CD4-positive, alpha-beta memory T cell (primary cell): ENCODE measurements at regions of chr2 and their contacts with region 1.

Region 1: GRCh38 chr2:86035883-86036668 is 69.6 kb downstream of the POLR1A start:
- DNase-seq: peak; percentile 79 to 88 (median 84)
- H3K4me3 ChIP-seq: peak overlapping the region; percentile 28 to 37
- H3K4me3 Mint-ChIP-seq: peak overlapping the region; percentile 74 to 87 (median 84)
- H3K27ac ChIP-seq: peak overlapping the region; percentile 82
- H3K27ac Mint-ChIP-seq: peak overlapping the region; percentile 96 to 100 (median 100)
- H3K4me1 ChIP-seq: peaks cover 81% of the 10 kb centered on the region
- H3K4me1 Mint-ChIP-seq: peaks cover 56 to 82% (median 68%) of the 10 kb centered on the region in 4 donors
- H3K27me3 ChIP-seq: no peaks in the 10 kb centered on the region
- H3K27me3 Mint-ChIP-seq: peaks cover 0 to 2% of the 10 kb centered on the region in 2 donors

Region 2: DNA sequence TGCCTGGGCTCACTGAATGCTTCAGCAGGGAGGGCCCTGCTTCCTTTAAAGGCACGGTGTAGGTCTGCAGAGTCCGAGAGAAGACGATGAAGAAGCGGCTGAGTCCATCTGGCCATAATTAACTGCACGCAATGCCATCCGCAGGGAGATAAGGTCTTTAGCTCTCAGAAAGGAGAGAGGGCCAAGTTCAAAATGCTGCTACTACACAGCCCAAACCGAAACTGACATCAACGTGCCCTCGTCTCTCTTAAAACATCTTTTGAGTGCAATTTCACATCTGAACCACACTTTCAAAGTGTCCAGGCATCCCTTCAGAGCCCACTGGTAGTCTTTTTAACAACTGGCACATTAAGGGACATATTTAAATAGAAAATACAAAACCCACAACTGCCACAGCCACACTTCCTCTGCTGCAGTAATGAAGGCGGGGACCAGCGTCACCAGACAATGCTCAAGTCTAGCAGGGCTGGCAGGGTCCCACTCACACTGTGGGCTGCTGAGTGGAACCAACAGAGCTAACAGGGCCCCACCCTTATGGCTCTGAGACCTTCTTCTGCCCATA is 183.1 kb before region 1 on chr2:
- CTCF ChIA-PET with region 1: interaction called, 9 read pairs
- POLR2A ChIA-PET with region 1: interaction called, 47 read pairs
- intact Hi-C with region 1: loop called (anchors 1 kb)
- DNase-seq: peak; percentile 73 to 88 (median 74)
- H3K4me3 ChIP-seq: peak overlapping the region; percentile 34 to 48
- H3K4me3 Mint-ChIP-seq: peak overlapping the region; percentile 82 to 92 (median 86)
- H3K27ac ChIP-seq: peak overlapping the region; percentile 84
- H3K27ac Mint-ChIP-seq: peak overlapping the region; percentile 98 to 100 (median 100)
- H3K4me1 ChIP-seq: peaks cover 81% of the 10 kb centered on the region
- H3K4me1 Mint-ChIP-seq: peaks cover 67 to 87% (median 76%) of the 10 kb centered on the region in 4 donors
- H3K27me3 ChIP-seq: no peaks in the 10 kb centered on the region
- H3K27me3 Mint-ChIP-seq: no peaks in the 10 kb centered on the region

Region 3: DNA sequence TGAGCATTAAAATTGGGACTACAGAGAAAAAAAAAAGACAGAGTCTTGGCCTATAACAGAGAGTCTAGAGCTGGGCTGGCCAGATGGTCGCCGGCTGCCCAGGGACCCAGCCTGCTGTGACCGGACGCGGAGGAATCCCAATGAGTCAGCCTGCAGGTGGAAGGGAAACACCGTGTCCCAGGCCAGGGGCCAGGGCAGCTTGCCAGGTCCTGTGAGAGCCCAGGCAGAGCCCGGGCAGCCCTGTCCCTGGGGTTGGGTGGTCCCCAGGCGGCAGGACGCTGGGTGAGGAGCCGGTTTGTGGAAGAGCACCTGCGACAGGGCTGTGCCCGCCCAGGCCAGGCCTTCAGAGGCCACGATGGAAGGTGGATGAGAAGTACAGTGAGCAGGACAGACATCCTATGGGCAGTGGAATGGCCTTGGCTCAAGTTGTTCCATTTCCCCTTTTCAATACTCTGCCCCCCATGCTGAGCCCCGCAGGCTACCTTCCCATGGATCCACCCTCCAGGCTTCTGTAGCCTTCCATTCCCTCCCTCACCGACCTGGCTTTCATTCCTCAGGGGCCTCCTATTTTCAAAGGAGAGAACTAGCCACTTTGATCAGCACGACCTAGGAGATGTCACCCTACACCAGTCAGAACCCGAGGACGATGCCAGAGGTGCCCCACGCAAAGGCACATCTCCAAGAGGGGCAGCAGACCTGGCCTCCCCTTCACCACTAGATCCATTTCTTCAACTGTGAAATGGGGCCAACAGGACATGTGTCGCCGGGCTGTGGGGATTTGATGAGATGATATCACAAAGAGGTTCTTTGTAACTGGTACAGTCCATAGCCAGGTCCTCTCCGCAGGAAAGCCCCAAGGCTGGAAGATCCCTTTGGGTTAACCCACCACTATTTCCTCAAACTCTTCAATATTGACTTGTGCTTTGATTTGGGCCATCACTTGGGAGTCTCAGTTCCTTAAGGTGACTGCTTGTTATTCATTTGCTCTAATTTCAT is 17.9 kb before region 1 on chr2:
- CTCF ChIA-PET with region 1: interaction called, 11 read pairs
- POLR2A ChIA-PET with region 1: interaction called, 5 read pairs
- intact Hi-C with region 1: no loop called
- DNase-seq: no peak
- H3K4me3 ChIP-seq: no peak overlapping the region
- H3K4me3 Mint-ChIP-seq: no peak overlapping the region
- H3K27ac ChIP-seq: no peak overlapping the region
- H3K27ac Mint-ChIP-seq: peak overlapping the region in 5 of 7 donors; percentile 57 to 90 (median 68)
- H3K4me1 ChIP-seq: peaks cover 14% of the 10 kb centered on the region
- H3K4me1 Mint-ChIP-seq: peaks cover 6 to 19% (median 11%) of the 10 kb centered on the region in 4 donors
- H3K27me3 ChIP-seq: no peaks in the 10 kb centered on the region
- H3K27me3 Mint-ChIP-seq: no peaks in the 10 kb centered on the region

Region 4: DNA sequence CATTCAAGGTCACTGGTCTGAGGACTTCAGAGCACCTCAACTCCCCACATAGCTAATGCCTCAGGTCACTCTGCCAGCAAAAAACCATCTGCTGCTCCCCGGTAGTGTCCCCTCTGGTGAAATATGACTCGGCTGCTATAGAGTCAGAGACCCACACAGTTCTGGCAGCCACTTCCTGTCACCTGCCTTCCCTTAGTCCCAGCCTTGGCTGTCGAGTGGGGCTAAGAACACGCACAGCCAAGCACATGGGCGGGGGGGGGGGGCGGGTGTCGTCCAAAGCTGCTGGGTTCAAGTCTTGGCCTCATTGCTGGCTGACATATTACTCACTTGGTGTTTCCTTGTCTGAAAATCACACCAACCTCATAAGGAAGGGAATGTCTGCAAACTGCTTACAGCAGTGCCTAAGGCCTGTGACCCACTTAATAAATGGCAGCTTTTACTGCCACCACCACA is 32.1 kb after region 1 on chr2:
- CTCF ChIA-PET with region 1: interaction called, 10 read pairs
- POLR2A ChIA-PET with region 1: interaction called, 20 read pairs
- intact Hi-C with region 1: no loop called
- DNase-seq: peak; percentile 25 to 72 (median 33)
- H3K4me3 ChIP-seq: no peak overlapping the region
- H3K4me3 Mint-ChIP-seq: peak overlapping the region in 3 of 8 donors; percentile 8 to 60 (median 56)
- H3K27ac ChIP-seq: no peak overlapping the region
- H3K27ac Mint-ChIP-seq: peak overlapping the region in 6 of 7 donors; percentile 19 to 72 (median 49)
- H3K4me1 ChIP-seq: peaks cover 18% of the 10 kb centered on the region
- H3K4me1 Mint-ChIP-seq: peaks cover 9 to 21% (median 12%) of the 10 kb centered on the region in 4 donors
- H3K27me3 ChIP-seq: no peaks in the 10 kb centered on the region
- H3K27me3 Mint-ChIP-seq: no peaks in the 10 kb centered on the region

Region 5: DNA sequence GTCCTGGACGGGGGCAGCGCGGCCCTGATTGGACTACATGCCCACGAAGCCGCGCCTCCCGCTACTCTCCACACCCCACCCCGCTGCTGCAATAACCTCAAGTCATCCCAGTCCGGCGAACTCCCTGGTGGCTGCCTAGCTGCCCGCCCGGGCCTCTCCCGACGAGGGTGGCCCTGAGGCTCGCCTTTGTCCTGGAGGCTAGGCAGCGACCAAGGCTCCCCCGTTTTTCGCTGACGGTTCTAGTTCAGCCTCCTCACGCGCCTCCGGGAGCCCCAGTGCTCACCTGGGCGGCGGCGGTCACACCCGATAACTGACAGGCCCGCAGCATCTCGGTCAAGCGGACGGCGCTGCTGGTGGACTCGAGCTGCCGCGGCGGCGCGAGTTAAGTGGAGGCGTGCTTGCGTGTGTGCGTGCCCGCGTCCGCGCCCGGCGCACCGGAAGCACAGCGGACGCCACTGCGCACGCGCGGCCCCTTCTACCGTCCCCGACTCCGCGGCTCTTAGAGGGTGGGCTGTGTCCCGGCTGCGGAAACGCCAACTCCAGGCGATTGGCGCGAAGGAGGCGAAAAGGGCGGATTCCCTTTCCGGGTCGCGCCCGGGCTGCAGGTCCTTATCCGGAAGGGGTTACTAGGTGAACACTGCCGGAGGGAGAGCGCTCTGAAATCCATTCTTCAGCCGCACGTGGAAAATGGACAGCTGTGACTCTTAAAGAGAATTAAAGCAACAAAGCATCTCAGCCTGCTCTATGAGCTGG is 159.2 kb after region 1 on chr2 and contains the start of gene IMMT:
- CTCF ChIA-PET with region 1: no interaction called
- POLR2A ChIA-PET with region 1: interaction called, 4 read pairs
- intact Hi-C with region 1: loop called (anchors 10 kb)
- DNase-seq: peak; percentile 92 to 95 (median 95)
- H3K4me3 ChIP-seq: peak within 1 kb of the TSS; percentile 27 to 100
- H3K4me3 Mint-ChIP-seq: peak within 1 kb of the TSS; percentile 90 to 97 (median 96)
- H3K27ac ChIP-seq: peak within 1 kb of the TSS; percentile 89
- H3K27ac Mint-ChIP-seq: peak within 1 kb of the TSS; percentile 83 to 98 (median 96)
- H3K4me1 ChIP-seq: peaks cover 57% of the 10 kb centered on the region
- H3K4me1 Mint-ChIP-seq: peaks cover 34 to 75% (median 55%) of the 10 kb centered on the region in 4 donors
- H3K27me3 ChIP-seq: no peaks in the 10 kb centered on the region
- H3K27me3 Mint-ChIP-seq: no peaks in the 10 kb centered on the region
- total RNA-seq, gene IMMT: 77.2 to 82.7 TPM